ENCODE measurements at regions of chr1 and their contacts with region 1.

Region 1: DNA sequence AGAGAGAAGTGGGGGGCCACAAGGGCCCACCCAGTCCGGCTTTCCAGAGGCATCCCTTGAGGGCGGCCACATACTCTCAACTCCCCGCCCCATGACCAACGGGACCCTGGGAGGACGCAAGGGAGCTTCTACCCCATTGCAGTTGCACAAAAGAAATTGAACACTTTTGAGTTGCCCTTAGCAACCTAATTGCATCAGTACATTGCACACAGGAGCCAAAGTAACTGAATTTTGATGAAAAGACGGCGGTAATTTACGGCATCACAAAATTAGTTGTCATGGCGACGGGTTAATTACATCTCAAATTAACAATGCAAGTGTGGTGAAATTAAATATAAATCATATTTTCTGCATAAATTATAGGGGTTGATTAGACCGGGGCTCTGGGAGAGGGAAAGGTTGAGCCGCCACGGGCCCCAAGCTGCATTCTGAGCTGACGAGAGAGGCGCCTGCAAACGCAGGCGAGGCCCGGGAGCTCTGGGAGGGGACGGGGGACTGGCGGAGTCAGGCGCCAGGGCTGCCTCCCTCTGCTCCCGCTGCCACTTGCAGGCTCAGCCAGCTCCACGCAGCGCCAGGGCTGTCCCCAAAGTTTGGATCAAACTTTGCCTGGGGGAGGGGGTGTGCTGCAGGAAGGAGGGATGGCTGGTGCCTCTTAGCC is 61.4 kb downstream of the CASZ1 start:
- DNase-seq: peak in 4 of 10 donors; percentile 20 to 58 (median 45)
- H3K4me3 ChIP-seq: peak overlapping the region in 16 of 59 donors; percentile 4 to 33 (median 21)
- H3K27ac ChIP-seq: peak overlapping the region in 8 of 59 donors; percentile 8 to 52 (median 37)
- H3K27me3 ChIP-seq: peaks cover 0 to 3% (median 0%) of the 10 kb centered on the region in 45 donors
- CTCF ChIP-seq: no peak

Region 2: DNA sequence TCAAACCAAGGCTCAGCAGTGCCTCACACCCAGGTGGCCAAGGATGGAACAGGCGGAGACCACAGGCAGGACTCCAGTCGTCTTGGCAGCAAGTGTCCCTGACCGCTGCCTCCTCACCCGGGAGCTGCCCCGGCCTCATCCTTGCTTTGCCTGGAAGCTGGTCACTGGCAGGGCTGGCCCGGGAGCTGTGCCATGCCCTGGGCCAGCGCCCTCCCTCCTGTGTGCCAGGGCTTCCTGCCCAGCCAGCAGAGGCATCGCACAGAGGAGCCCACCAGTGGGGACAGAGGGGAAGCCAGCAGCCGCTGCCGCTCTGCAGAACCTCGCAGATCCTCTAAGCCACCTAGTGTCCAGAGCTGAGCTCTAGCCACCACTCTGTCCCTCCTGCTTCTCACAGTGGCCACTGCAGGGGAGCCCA is 53.5 kb after region 1 on chr1:
- intact Hi-C with region 1: loop called in 1 of 2 experiments (anchors 5 kb)
- DNase-seq: peak; percentile 35 to 84 (median 72)
- H3K4me3 ChIP-seq: peak overlapping the region in 1 of 59 donors; percentile 14
- H3K27ac ChIP-seq: peak overlapping the region in 5 of 59 donors; percentile 5 to 55 (median 48)
- H3K27me3 ChIP-seq: peaks cover 0 to 99% (median 73%) of the 10 kb centered on the region in 45 donors
- CTCF ChIP-seq: peak in 53 of 56 donors; percentile 9 to 74 (median 52)

Measured in dorsolateral prefrontal cortex (tissue), 120 donors.